ENCODE measurements at regions of chr10 and their contacts with region 1.

Region 1: DNA sequence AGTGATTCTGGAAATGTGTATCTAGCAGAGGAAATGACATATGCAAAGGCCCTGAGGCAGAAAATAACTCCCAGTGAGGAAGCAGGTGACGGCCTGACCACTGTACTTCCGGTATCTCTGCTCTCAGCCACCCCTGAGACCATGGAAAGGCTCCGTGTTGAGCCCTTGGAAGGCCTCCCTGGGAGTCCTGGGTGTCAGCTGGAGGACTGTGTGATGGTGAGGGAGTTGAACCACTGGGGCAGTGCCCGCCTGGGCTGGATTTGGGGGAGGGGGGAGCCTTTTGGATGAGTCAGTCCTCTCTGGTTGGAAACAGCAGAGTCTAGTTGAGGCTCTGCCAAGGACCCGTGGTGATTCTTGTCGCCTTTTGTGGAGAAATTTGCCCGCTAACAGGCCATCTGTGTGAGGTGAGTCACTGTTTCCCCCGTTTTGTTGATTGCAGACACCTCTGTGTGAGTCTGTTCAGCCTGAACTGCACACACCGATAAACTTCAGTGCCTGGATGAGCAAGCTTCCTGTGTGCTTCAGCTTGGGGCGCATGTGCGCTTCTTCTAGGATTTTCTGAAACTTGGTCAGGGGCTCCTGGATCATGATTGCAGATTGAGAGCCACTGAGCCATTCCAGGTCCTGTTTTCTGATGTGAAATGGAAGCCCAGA is 98.6 kb downstream of the GRK5 start:
- DNase-seq: peak; percentile 50 to 92 (median 82)
- ATAC-seq: peak; percentile 81
- H3K4me3 ChIP-seq: peak overlapping the region; percentile 57
- H3K4me3 Mint-ChIP-seq: peak overlapping the region; percentile 88
- H3K27ac ChIP-seq: peak overlapping the region; percentile 83 to 94
- H3K27ac Mint-ChIP-seq: peak overlapping the region; percentile 94
- H3K4me1 ChIP-seq: peaks cover 77% of the 10 kb centered on the region
- H3K4me1 Mint-ChIP-seq: peaks cover 75% of the 10 kb centered on the region
- H3K27me3 ChIP-seq: no peaks in the 10 kb centered on the region
- H3K27me3 Mint-ChIP-seq: no peaks in the 10 kb centered on the region
- CTCF ChIP-seq: no peak

Region 2: DNA sequence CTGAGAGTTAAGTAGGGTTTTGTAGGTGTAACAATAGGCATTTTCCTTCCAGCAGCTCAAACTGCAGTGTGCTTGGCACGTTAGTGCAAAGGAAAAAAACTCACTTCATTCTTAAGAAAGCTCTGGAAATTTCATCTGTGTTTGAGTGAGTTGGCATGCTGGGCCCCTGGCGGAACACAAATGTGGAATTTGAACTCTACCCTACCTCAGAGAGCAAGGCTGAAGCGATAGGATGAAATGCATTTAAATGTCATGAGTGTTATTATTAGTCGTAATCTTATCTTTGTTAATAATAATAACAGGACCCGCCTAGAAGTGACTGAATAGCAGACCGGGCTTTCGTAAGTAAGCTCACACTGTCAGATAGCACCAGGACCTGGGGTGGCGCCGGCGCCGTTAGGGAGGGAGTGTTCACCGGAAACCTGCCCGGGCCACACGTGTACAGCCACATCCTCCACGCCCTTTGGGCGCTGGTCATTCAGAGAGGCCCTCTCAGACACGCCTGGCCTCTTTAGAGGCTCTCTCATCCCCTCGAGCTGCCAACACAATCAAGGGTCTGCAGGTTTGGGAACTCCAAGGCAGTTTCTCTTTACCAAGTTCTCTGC is 35.1 kb before region 1 on chr10:
- CTCF ChIA-PET with region 1: interaction called, 14 read pairs
- POLR2A ChIA-PET with region 1: interaction called, 21 read pairs
- intact Hi-C with region 1: loop called (anchors 2 to 5 kb)
- DNase-seq: peak; percentile 12 to 76 (median 42)
- ATAC-seq: no peak
- H3K4me3 ChIP-seq: peak overlapping the region; percentile 44
- H3K4me3 Mint-ChIP-seq: peak overlapping the region; percentile 74
- H3K27ac ChIP-seq: peak overlapping the region in 1 of 2 donors; percentile 20
- H3K27ac Mint-ChIP-seq: peak overlapping the region; percentile 96
- H3K4me1 ChIP-seq: peaks cover 65% of the 10 kb centered on the region
- H3K4me1 Mint-ChIP-seq: peaks cover 69% of the 10 kb centered on the region
- H3K27me3 ChIP-seq: no peaks in the 10 kb centered on the region
- H3K27me3 Mint-ChIP-seq: no peaks in the 10 kb centered on the region
- CTCF ChIP-seq: no peak

Region 3: DNA sequence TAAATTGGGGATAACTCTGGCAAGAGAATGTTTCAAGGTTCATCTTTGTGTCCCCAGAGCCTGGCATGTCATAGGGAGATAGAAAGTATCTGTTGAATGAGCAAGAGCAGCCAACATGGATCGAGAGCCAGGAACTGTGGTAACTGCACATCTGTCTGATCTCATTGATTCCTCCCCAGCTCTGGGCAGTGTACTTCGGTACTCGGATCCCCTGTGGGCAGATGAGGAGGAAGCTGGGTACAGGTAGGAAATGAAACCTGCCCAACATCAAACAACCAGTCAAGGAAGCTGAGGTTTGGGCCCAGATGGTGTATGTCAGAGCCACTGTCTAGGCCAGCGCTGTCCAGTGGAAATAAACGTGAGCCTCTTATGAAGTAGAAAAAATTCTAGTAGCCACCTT is 22.2 kb before region 1 on chr10:
- CTCF ChIA-PET with region 1: interaction called, 3 read pairs
- POLR2A ChIA-PET with region 1: interaction called, 4 read pairs
- intact Hi-C with region 1: loop called in 1 of 2 experiments (anchors 2 kb)
- DNase-seq: peak in 4 of 14 experiments; percentile 45 to 74 (median 66)
- ATAC-seq: peak; percentile 57
- H3K4me3 ChIP-seq: no peak overlapping the region
- H3K4me3 Mint-ChIP-seq: peak overlapping the region; percentile 79
- H3K27ac ChIP-seq: no peak overlapping the region
- H3K27ac Mint-ChIP-seq: peak overlapping the region; percentile 68
- H3K4me1 ChIP-seq: peaks cover 64% of the 10 kb centered on the region
- H3K4me1 Mint-ChIP-seq: peaks cover 91% of the 10 kb centered on the region
- H3K27me3 ChIP-seq: no peaks in the 10 kb centered on the region
- H3K27me3 Mint-ChIP-seq: no peaks in the 10 kb centered on the region
- CTCF ChIP-seq: no peak

Region 4: GRCh38 chr10:119290291-119291048 is 15.5 kb before region 1 on chr10:
- CTCF ChIA-PET with region 1: interaction called, 4 read pairs
- POLR2A ChIA-PET with region 1: interaction called, 4 read pairs
- intact Hi-C with region 1: loop called (anchors 2 kb)
- DNase-seq: no peak
- ATAC-seq: no peak
- H3K4me3 ChIP-seq: no peak overlapping the region
- H3K4me3 Mint-ChIP-seq: peak overlapping the region; percentile 23
- H3K27ac ChIP-seq: no peak overlapping the region
- H3K27ac Mint-ChIP-seq: peak overlapping the region; percentile 84
- H3K4me1 ChIP-seq: peaks cover 72% of the 10 kb centered on the region
- H3K4me1 Mint-ChIP-seq: peaks cover 72% of the 10 kb centered on the region
- H3K27me3 ChIP-seq: no peaks in the 10 kb centered on the region
- H3K27me3 Mint-ChIP-seq: no peaks in the 10 kb centered on the region
- CTCF ChIP-seq: no peak

Region 5: DNA sequence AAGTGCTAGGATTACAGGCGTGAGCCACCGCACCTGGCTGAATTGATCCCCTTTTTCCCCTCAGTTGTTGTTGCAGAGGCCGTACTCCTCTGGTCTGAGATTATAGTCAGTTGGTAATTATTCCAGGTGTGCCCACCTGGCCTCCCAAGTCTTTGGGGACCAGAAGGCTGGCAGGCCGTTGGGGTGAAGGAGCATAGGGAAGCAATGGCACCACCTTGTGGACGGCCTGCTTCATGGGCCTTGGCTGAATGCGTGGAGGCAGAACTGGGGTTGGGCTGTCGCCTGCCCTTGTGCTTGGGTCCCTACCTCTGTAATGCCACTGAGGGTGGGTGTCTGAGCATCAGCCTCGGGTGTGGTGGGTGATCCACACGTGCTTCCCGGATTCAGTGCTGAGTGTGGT is 110.9 kb after region 1 on chr10:
- CTCF ChIA-PET with region 1: no interaction called
- POLR2A ChIA-PET with region 1: no interaction called
- intact Hi-C with region 1: loop called (anchors 5 kb)
- DNase-seq: peak; percentile 55 to 84 (median 62)
- ATAC-seq: peak; percentile 86
- H3K4me3 ChIP-seq: no peak overlapping the region
- H3K4me3 Mint-ChIP-seq: no peak overlapping the region
- H3K27ac ChIP-seq: no peak overlapping the region
- H3K27ac Mint-ChIP-seq: no peak overlapping the region
- H3K4me1 ChIP-seq: no peaks in the 10 kb centered on the region
- H3K4me1 Mint-ChIP-seq: no peaks in the 10 kb centered on the region
- H3K27me3 ChIP-seq: no peaks in the 10 kb centered on the region
- H3K27me3 Mint-ChIP-seq: no peaks in the 10 kb centered on the region
- CTCF ChIP-seq: peak; percentile 63

Region 6: DNA sequence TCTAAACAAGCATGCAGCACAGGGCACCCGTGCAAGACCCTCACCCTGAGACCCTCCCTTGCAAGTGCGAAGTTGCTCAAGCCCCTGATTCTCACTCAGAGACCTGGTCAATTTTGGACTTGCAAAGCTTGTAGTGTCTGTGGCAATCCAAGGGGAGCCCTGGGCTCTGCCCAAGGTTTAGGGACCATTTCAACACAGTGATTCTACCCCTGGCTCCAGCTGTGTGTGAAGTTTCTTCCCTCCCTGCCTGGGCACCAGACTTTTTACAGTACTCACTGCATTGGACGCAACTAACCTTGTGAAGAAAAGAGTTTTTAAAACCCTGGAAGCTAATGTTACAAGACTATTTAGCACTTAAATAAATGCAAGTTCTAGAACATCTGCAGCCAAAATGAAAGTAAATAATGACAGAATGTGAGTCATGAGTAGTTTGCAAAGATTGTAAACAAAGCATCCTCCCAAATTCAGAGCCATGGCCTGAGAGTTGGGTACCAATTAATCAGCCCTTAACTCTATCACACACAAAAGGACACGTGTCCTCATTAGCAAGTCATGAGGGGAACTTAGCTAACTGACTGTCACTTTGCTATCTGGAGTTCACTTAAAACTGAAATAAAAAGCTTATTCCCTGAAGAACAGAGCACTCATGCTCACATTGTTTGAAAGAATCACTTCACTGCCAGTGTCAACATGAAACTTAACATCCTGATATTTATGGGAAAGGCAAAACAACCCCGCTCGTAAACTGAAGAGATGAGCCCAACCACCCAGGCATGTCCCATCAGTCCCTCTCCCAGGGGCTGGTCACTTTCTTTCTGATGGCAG is 188.5 kb after region 1 on chr10:
- CTCF ChIA-PET with region 1: interaction called, 3 read pairs
- POLR2A ChIA-PET with region 1: no interaction called
- intact Hi-C with region 1: loop called in 1 of 2 experiments (anchors 5 kb)
- DNase-seq: peak in 1 of 14 experiments; percentile 23
- ATAC-seq: no peak
- H3K4me3 ChIP-seq: no peak overlapping the region
- H3K4me3 Mint-ChIP-seq: peak overlapping the region; percentile 57
- H3K27ac ChIP-seq: peak overlapping the region; percentile 33 to 57
- H3K27ac Mint-ChIP-seq: peak overlapping the region; percentile 92
- H3K4me1 ChIP-seq: peaks cover 72% of the 10 kb centered on the region
- H3K4me1 Mint-ChIP-seq: peaks cover 80% of the 10 kb centered on the region
- H3K27me3 ChIP-seq: no peaks in the 10 kb centered on the region
- H3K27me3 Mint-ChIP-seq: no peaks in the 10 kb centered on the region
- CTCF ChIP-seq: no peak

Region 7: GRCh38 chr10:119502209-119502608 is 196.2 kb after region 1 on chr10:
- CTCF ChIA-PET with region 1: interaction called, 3 read pairs
- POLR2A ChIA-PET with region 1: no interaction called
- intact Hi-C with region 1: loop called in 1 of 2 experiments (anchors 2 kb)
- DNase-seq: peak; percentile 64 to 96 (median 88)
- ATAC-seq: peak; percentile 84
- H3K4me3 ChIP-seq: peak overlapping the region; percentile 17
- H3K4me3 Mint-ChIP-seq: peak overlapping the region; percentile 80
- H3K27ac ChIP-seq: peak overlapping the region; percentile 78 to 95
- H3K27ac Mint-ChIP-seq: peak overlapping the region; percentile 99
- H3K4me1 ChIP-seq: peaks cover 92% of the 10 kb centered on the region
- H3K4me1 Mint-ChIP-seq: peaks cover 94% of the 10 kb centered on the region
- H3K27me3 ChIP-seq: no peaks in the 10 kb centered on the region
- H3K27me3 Mint-ChIP-seq: no peaks in the 10 kb centered on the region
- CTCF ChIP-seq: no peak

Measured in CD4-positive, alpha-beta T cell (primary cell).